ENCODE measurements at regions of chr2 and their contacts with region 1.

Region 1: DNA sequence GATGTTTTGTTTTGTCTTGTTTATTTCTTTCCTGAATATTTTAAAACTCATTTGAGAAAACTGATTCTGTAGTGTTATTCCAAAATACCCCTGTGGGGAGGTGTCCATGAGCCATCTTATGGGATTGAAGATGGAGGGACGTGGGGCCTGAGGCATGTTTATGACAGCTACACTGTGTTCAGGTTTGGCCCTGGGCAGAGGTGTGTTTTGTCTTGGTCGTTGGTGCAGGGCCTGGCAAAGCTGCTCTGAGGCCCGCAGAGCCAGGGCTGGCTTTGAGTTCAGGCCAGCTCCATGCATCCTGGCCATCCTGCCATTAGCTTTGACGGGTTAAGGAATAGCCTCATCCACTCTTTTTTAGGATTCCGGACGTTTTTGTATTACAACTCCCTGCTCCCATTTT is 68.9 kb downstream of the TMEM18 start:
- DNase-seq: no peak
- CTCF ChIP-seq: no peak

Region 2: DNA sequence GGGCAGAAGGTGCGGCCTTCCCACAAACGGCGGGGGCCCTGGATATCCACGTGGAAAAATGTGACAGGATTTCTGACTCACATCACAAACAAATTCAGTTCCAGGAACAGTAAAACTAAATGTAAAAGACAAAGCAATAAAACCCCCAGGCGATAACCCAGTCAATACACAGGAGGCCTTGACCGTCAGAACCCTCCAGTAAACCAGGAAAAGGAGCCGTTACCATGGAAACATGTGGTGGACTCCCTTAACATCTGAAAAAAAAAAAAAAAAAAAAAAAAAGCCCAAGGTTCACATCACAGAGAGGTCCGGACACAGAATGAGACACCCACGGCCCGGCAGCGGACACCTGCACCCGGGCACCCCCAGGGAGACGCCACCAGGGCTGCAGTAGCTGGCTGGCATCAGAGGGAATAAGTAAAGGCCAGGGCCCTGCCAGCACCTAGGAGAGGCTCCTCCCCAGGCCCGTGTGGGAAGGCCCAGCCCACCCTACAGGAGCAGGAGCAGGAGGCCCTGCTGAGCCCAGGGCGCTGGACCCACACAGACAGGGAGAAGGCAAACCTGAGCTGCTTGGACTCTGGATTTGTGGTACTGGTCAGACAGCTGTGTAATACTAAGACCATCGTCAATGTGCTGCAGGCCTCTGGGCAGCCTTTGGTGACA is 14.8 kb before region 1 on chr2:
- CTCF ChIA-PET with region 1: no interaction called
- POLR2A ChIA-PET with region 1: interaction called, 10 read pairs
- DNase-seq: no peak
- CTCF ChIP-seq: no peak

Measured in GM10248 (cell line).